Right lobe of liver (tissue), 6 donors: ENCODE measurements at regions of chr14 and their contacts with region 1.

Region 1: GRCh38 chr14:89409961-89410360 is 7.1 kb downstream of the FOXN3 start:
- DNase-seq: no peak
- ATAC-seq: no peak
- H3K4me3 ChIP-seq: no peak overlapping the region
- H3K27ac ChIP-seq: no peak overlapping the region
- H3K4me1 ChIP-seq: peaks cover 0 to 15% (median 2%) of the 10 kb centered on the region in 4 donors
- H3K27me3 ChIP-seq: no peaks in the 10 kb centered on the region
- CTCF ChIP-seq: no peak
- POLR2A ChIP-seq: no peak

Region 2: GRCh38 chr14:89371585-89372511 is 38.1 kb before region 1 on chr14:
- intact Hi-C with region 1: loop called in 1 of 2 experiments (anchors 5 kb)
- DNase-seq: no peak
- ATAC-seq: no peak
- H3K4me3 ChIP-seq: no peak overlapping the region
- H3K27ac ChIP-seq: peak overlapping the region in 1 of 3 donors; percentile 82
- H3K4me1 ChIP-seq: peaks cover 0 to 44% (median 22%) of the 10 kb centered on the region in 4 donors
- H3K27me3 ChIP-seq: no peaks in the 10 kb centered on the region
- CTCF ChIP-seq: no peak
- POLR2A ChIP-seq: no peak